HepG2 (cell line): ENCODE measurements at regions of chr3 and their contacts with region 1.

Region 1: DNA sequence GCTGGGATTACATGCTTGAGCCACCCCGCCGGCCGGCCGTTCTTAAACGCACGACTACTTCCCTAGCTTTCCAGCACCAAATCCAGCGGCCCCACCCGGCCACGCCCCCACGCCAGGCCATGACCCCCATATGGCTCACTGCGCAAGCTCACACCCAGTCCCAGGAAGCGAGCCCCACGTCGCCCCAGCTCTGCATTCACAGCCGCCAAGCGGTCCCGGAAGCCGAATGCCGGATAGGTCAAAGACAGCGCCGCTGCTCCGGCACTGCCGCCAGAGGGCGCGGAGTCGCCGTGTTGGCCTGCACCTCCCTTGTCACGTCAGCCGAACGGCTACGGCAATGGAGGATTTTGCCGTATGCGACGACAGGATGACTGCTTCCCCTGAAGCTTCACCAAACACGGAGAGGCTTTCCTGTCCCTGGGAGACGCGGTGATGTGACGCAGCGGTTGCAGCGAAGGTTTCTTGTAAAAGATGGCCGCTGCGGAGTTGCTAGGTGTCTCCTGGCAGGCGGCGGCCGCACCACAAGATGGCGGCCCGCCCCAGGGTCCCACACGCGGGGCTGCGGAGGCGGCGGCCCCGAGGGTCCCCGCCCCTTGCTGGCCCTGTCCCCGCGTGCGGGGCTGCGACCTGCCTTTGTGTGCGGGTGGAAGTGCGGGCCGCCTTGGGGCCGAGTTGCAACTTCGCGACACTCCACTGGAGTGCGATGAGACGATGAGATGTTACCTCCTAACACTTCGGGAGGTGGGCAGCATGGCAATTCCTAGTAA is 30.2 kb upstream of the RPN1 start:
- DNase-seq: peak; percentile 95
- ATAC-seq: peak; percentile 98
- H3K4me3 ChIP-seq: peak overlapping the region; percentile 67 to 88 (median 69)
- H3K27ac ChIP-seq: peak overlapping the region; percentile 93
- H3K4me1 ChIP-seq: peaks cover 19% of the 10 kb centered on the region
- H3K27me3 ChIP-seq: no peaks in the 10 kb centered on the region
- CTCF ChIP-seq: peak; percentile 100
- EP300 ChIP-seq: 0 out of 4 replicates have a peak, but pooled peaks of 1 of the 2 experiments have one; percentile 32
- POLR2A ChIP-seq: peak; percentile 82 to 97
- RAD21 ChIP-seq: peak; percentile 95

Region 2: GRCh38 chr3:127458696-127459604 is 1221.8 kb before region 1 on chr3:
- CTCF ChIA-PET with region 1: no interaction called
- POLR2A ChIA-PET with region 1: no interaction called
- in situ Hi-C with region 1: no loop called
- intact Hi-C with region 1: no loop called
- DNase-seq: no peak
- ATAC-seq: no peak
- H3K4me3 ChIP-seq: no peak overlapping the region
- H3K27ac ChIP-seq: no peak overlapping the region
- H3K4me1 ChIP-seq: no peaks in the 10 kb centered on the region
- H3K27me3 ChIP-seq: peaks cover 2 to 55% of the 10 kb centered on the region in 2 experiments; a peak in 4 of 5 replicates
- CTCF ChIP-seq: no peak
- EP300 ChIP-seq: no peak
- POLR2A ChIP-seq: no peak
- RAD21 ChIP-seq: no peak

Region 3: GRCh38 chr3:128617557-128618397 is 63.0 kb before region 1 on chr3:
- CTCF ChIA-PET with region 1: no interaction called
- POLR2A ChIA-PET with region 1: interaction called, 10 read pairs
- in situ Hi-C with region 1: no loop called
- intact Hi-C with region 1: no loop called
- DNase-seq: peak; percentile 90
- ATAC-seq: peak; percentile 83
- H3K4me3 ChIP-seq: peak overlapping the region; percentile 71 to 83 (median 76)
- H3K27ac ChIP-seq: peak overlapping the region; percentile 71
- H3K4me1 ChIP-seq: peaks cover 40% of the 10 kb centered on the region
- H3K27me3 ChIP-seq: no peaks in the 10 kb centered on the region
- CTCF ChIP-seq: peak; percentile 94
- EP300 ChIP-seq: no peak
- POLR2A ChIP-seq: peak; percentile 37 to 61; a peak in 3 of 4 replicates
- RAD21 ChIP-seq: peak; percentile 78

Region 4: GRCh38 chr3:128693696-128694095 is 12.9 kb after region 1 on chr3:
- CTCF ChIA-PET with region 1: no interaction called
- POLR2A ChIA-PET with region 1: interaction called, 13 read pairs
- in situ Hi-C with region 1: no loop called
- intact Hi-C with region 1: no loop called
- DNase-seq: no peak
- ATAC-seq: no peak
- H3K4me3 ChIP-seq: no peak overlapping the region
- H3K27ac ChIP-seq: no peak overlapping the region
- H3K4me1 ChIP-seq: peaks cover 17% of the 10 kb centered on the region
- H3K27me3 ChIP-seq: no peaks in the 10 kb centered on the region; a peak in 1 of 5 replicates
- CTCF ChIP-seq: no peak
- EP300 ChIP-seq: no peak
- POLR2A ChIP-seq: no peak
- RAD21 ChIP-seq: no peak

Region 5: GRCh38 chr3:128714887-128715491 is 34.2 kb after region 1 on chr3:
- CTCF ChIA-PET with region 1: no interaction called
- POLR2A ChIA-PET with region 1: no interaction called
- in situ Hi-C with region 1: no loop called
- intact Hi-C with region 1: no loop called
- DNase-seq: no peak
- ATAC-seq: no peak
- H3K4me3 ChIP-seq: no peak overlapping the region
- H3K27ac ChIP-seq: no peak overlapping the region
- H3K4me1 ChIP-seq: peaks cover 9% of the 10 kb centered on the region; the same call in 1 of the 2 replicates
- H3K27me3 ChIP-seq: peaks cover 0 to 24% of the 10 kb centered on the region in 2 experiments; a peak in 2 of 5 replicates
- CTCF ChIP-seq: no peak
- EP300 ChIP-seq: no peak
- POLR2A ChIP-seq: no peak
- RAD21 ChIP-seq: no peak

Region 6: GRCh38 chr3:128794770-128795649 is 114.2 kb after region 1 on chr3:
- CTCF ChIA-PET with region 1: interaction called, 9 read pairs
- POLR2A ChIA-PET with region 1: interaction called, 12 read pairs
- in situ Hi-C with region 1: loop called (anchors 10 kb)
- intact Hi-C with region 1: loop called (anchors 1 kb)
- DNase-seq: peak; percentile 62
- ATAC-seq: peak; percentile 99
- H3K4me3 ChIP-seq: no peak overlapping the region
- H3K27ac ChIP-seq: no peak overlapping the region
- H3K4me1 ChIP-seq: no peaks in the 10 kb centered on the region
- H3K27me3 ChIP-seq: no peaks in the 10 kb centered on the region
- CTCF ChIP-seq: peak; percentile 84
- EP300 ChIP-seq: no peak
- POLR2A ChIP-seq: no peak
- RAD21 ChIP-seq: peak; percentile 56

Region 7: GRCh38 chr3:128950223-128950938 is 269.6 kb after region 1 on chr3:
- CTCF ChIA-PET with region 1: no interaction called
- POLR2A ChIA-PET with region 1: no interaction called
- in situ Hi-C with region 1: no loop called
- intact Hi-C with region 1: loop called (anchors 5 kb)
- DNase-seq: peak; percentile 80
- ATAC-seq: peak; percentile 99
- H3K4me3 ChIP-seq: peak overlapping the region in 2 of 3 experiments; percentile 17 to 55; a peak in 3 of 6 replicates
- H3K27ac ChIP-seq: no peak overlapping the region
- H3K4me1 ChIP-seq: peaks cover 13% of the 10 kb centered on the region
- H3K27me3 ChIP-seq: peaks cover 0 to 2% of the 10 kb centered on the region in 2 experiments; a peak in 2 of 5 replicates
- CTCF ChIP-seq: peak; percentile 91
- EP300 ChIP-seq: no peak
- POLR2A ChIP-seq: no peak
- RAD21 ChIP-seq: peak; percentile 84